HAP-1 (cell line): ENCODE measurements at regions of chr3 and their contacts with region 1.

Region 1: DNA sequence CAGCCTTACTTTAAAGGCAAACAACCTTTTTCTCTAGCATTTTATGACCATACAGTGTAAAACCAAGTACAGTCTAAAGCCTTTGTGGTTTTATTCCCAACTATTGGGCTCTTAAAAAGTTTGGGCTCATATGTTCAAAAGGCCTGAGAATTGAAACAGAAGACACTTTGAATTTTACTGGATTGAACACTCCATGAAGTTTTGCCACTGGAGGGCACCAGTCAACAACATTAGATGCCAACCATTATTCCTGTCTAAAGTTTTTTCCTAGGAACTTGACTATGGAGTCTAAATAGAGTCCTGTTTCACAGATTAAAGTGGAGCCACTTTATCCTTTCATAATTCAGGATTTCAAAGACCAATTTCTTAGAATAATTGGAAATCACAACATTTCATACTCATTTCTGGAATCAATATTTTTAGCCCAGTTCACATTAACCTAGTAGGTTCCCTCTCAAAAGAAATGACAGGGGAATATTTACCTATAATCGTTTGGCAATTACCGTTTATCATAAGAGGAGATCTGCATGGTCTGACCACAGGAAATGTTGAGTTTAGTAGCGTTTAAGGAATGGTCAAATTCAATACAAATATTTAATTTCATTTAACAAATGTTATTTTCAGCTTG is 244.1 kb upstream of the PDZRN3 start:
- DNase-seq: peak; percentile 76 to 83
- H3K4me3 ChIP-seq: no peak overlapping the region
- H3K4me1 ChIP-seq: peaks cover 11% of the 10 kb centered on the region
- H3K27me3 ChIP-seq: no peaks in the 10 kb centered on the region

Region 2: GRCh38 chr3:73729969-73730440 is 138.8 kb before region 1 on chr3:
- in situ Hi-C with region 1: no loop called
- DNase-seq: no peak
- H3K4me3 ChIP-seq: no peak overlapping the region
- H3K4me1 ChIP-seq: peaks cover 28% of the 10 kb centered on the region
- H3K27me3 ChIP-seq: no peaks in the 10 kb centered on the region

Region 3: DNA sequence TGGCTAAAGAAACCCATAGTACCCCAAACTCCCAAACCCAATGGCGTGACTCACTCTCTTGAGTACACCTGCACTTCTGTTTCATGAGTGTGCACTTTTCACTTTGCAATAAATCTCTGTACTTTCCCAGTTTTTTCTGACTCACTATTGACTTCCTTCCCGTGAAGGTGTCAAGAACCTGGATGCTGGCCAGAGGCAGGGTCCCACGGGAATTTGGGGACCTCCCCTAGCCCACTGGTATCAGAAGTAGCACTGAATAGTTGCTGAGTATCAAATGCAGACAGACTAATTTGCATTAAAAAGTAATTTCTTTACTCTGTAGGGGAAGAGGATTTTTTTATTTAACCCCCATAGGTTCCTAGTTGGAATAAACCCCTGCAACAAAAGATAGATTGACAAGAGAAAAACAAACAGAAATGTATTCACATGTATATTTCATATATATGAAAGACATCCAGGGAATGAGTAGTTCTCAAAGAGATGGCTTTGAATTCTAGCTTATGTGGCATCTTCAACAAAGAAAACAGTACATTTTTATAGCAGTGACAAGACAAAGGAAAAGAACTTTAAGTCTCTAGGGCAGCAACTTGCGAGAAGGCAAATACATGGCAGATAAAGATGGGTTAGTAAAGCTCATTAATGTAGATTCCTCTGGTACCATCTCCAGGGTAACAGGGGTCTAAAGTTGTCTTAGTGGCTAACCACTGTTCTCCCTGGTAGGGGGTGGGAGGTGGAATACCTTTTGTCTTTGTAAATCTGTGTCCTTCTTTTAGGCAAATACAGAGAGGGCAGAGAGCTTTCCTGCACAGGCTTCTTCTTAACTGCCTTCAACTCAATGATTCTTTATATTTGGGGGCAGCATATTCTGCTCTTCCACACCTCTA is 141.4 kb after region 1 on chr3:
- in situ Hi-C with region 1: no loop called
- DNase-seq: peak; percentile 92 to 99
- H3K4me3 ChIP-seq: no peak overlapping the region
- H3K4me1 ChIP-seq: peaks cover 35% of the 10 kb centered on the region
- H3K27me3 ChIP-seq: no peaks in the 10 kb centered on the region

Region 4: GRCh38 chr3:74630602-74631001 is 761.8 kb after region 1 on chr3:
- in situ Hi-C with region 1: loop called (anchors 25 kb)
- DNase-seq: no peak
- H3K4me3 ChIP-seq: no peak overlapping the region
- H3K4me1 ChIP-seq: no peaks in the 10 kb centered on the region
- H3K27me3 ChIP-seq: no peaks in the 10 kb centered on the region

Region 5: DNA sequence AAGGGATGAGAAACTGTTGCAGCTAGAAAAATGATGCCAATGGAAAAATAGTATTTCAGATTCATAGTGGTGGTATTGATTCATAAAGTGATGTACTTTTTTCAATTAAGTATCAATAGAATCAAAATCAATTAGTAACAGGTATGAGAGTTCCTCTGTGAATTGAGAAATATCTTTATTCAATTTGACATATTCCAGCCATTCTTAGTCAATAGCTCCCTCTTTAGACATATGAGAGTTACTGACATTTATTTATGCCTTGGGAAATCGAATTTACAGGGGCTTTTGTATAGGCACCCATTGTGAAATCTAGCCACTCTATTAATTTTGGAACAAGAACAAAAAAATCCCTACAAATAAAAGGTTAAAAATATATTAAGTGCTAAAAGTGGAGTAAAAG is 1132.5 kb after region 1 on chr3:
- in situ Hi-C with region 1: loop called (anchors 25 kb)
- DNase-seq: peak in 1 of 2 experiments; percentile 42
- H3K4me3 ChIP-seq: no peak overlapping the region
- H3K4me1 ChIP-seq: no peaks in the 10 kb centered on the region
- H3K27me3 ChIP-seq: no peaks in the 10 kb centered on the region

Region 6: DNA sequence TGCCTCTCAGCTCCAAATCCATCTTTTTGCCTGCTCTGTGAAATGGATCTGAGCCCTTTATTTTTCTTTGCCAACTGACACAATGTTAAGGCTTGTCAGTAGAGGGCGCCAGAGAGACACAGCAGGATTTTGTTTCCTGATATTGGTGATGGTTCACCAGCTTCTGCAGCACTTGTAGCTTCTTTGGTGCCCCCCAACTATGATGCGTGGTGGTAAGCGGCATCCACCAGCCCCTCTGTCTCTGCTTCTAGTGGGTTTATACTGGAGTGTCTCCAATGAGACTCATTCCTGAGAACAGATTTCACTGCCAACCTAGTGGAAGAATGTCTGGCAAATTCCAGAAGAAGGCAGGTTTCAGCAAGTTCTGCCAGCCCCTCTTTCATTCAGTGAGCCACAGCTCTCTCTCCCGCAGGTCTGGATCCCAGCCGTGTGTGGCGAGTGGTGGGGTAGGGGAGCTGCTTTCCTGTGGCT is 1323.4 kb after region 1 on chr3:
- in situ Hi-C with region 1: loop called (anchors 25 kb)
- DNase-seq: peak in 1 of 2 experiments; percentile 75
- H3K4me3 ChIP-seq: no peak overlapping the region
- H3K4me1 ChIP-seq: no peaks in the 10 kb centered on the region
- H3K27me3 ChIP-seq: no peaks in the 10 kb centered on the region